ENCODE measurements at regions of chr12 and their contacts with region 1.

Region 1: DNA sequence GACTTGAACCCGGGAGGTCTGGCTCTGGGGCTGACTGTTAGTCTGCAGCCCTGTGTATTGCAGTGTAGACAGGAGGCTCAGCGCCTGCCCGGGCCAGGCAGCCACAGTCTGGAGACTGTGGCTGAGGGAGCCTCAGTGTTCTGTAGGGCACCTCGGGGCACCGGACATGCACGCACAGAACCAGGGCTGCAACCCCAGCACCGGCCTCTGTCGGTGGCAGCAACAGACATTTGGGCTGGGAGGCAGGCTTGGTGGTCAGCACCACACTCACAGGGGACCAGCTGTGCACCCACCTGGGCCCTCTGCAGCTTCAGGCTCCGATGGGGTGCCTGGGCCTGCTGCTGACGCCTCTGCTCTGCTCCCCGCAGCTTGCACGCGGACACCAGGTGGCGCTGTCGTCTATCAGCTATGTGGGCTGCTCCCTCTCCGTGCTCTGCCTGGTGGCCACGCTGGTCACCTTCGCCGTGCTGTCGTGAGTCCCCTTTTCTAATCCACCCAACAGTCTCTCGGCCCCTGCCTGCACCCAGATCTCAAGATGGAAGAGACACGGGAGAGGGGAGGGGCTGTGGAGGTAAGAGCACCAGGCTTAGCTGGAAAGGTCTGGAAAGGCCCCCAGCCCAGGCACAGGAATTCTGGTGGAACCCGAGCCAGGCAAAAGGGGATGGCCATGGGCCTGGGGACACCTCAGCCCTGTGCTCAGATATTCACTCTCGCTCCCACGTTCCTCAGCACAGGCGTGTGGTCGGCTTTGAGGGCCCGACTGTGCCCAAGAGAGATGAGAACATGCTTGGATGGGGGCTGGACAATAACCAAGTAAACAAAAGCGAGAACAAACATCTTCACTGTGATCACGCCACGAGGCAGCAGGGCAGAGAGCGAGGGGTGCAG is 151.0 kb downstream of the ADGRD1 start:
- DNase-seq: peak; percentile 92
- H3K4me3 ChIP-seq: peak overlapping the region in 1 of 2 experiments; percentile 37; a peak in 1 of 4 replicates
- H3K27ac ChIP-seq: no peak overlapping the region
- H3K4me1 ChIP-seq: peaks cover 0 to 3% of the 10 kb centered on the region in 2 experiments; a peak in 1 of 4 replicates
- H3K27me3 ChIP-seq: no peaks in the 10 kb centered on the region
- CTCF ChIP-seq: peak; percentile 27
- EP300 ChIP-seq: no peak
- RAD21 ChIP-seq: peak; percentile 89

Region 2: DNA sequence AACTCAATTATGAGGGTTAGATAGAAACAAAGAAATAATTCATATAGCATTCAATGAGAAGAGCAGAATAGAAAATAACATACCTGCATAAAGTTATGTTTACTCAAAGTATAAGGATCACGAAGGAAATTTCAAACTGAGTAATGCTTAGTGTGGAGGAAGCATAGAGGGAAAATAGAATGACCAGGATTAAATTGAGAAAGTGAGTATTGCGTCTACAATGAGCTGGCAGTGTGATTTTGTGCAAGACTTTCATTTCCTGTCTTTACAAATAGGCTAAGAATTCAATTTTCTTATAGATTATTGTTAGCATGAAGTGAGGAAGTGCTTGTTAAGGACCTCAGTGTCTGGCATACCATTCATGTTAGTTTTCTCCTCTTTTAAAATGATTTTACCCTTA is 139.0 kb before region 1 on chr12:
- CTCF ChIA-PET with region 1: no interaction called
- POLR2A ChIA-PET with region 1: no interaction called
- DNase-seq: no peak
- H3K4me3 ChIP-seq: no peak overlapping the region
- H3K27ac ChIP-seq: no peak overlapping the region
- H3K4me1 ChIP-seq: peaks cover 0 to 11% of the 10 kb centered on the region in 2 experiments; a peak in 2 of 4 replicates
- H3K27me3 ChIP-seq: no peaks in the 10 kb centered on the region
- CTCF ChIP-seq: no peak
- EP300 ChIP-seq: no peak
- RAD21 ChIP-seq: no peak

Region 3: GRCh38 chr12:131007031-131007739 is 97.5 kb before region 1 on chr12:
- CTCF ChIA-PET with region 1: interaction called, 13 read pairs
- POLR2A ChIA-PET with region 1: no interaction called
- DNase-seq: peak; percentile 89
- H3K4me3 ChIP-seq: no peak overlapping the region
- H3K27ac ChIP-seq: peak overlapping the region in 1 of 2 experiments; percentile 86; a peak in 2 of 4 replicates
- H3K4me1 ChIP-seq: peaks cover 0 to 46% of the 10 kb centered on the region in 2 experiments; a peak in 2 of 4 replicates
- H3K27me3 ChIP-seq: no peaks in the 10 kb centered on the region
- CTCF ChIP-seq: no peak
- EP300 ChIP-seq: peak in 1 of 2 experiments; percentile 68; a peak in 2 of 4 replicates
- RAD21 ChIP-seq: no peak

Region 4: DNA sequence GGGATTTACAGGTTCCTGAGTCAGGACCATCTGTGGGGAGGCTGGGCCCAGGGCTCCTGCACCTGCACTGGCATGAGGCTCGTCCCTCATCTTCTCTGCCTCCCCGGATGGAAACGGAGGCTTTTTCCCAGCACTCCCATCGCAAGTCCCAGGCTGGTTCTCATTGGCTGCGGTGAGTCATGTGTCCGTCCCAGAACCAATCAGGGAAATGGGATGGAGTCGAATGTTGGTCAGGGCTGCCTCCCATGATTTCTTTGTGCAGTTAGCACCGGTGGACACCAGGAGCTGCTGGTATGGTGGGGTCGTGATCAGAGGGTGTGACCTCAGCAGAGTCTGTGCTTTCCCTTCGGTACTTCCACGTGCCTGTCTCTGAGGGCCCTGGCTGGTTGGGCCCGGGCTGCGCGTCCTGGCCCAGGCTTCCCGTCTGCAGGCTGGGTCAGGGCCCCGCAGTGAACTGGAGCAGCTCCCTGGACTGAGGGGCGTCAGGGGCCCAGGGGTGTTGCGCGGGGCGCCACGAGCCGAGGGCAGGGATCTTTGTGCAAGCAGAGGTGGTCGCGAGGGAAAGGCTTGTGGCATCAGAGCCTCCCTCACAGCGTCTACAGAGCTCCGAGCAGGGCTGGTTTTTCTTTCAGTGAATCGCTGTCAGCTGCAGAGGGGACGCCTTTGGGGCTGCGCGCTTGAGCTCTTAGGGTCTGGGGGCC is 17.1 kb after region 1 on chr12:
- CTCF ChIA-PET with region 1: interaction called, 83 read pairs
- POLR2A ChIA-PET with region 1: no interaction called
- DNase-seq: no peak
- H3K4me3 ChIP-seq: no peak overlapping the region
- H3K27ac ChIP-seq: no peak overlapping the region
- H3K4me1 ChIP-seq: no peaks in the 10 kb centered on the region; a peak in 1 of 4 replicates
- H3K27me3 ChIP-seq: no peaks in the 10 kb centered on the region
- CTCF ChIP-seq: no peak
- EP300 ChIP-seq: no peak
- RAD21 ChIP-seq: no peak

Region 5: GRCh38 chr12:131137836-131138637 is 33.3 kb after region 1 on chr12:
- CTCF ChIA-PET with region 1: interaction called, 164 read pairs
- POLR2A ChIA-PET with region 1: no interaction called
- DNase-seq: peak; percentile 69
- H3K4me3 ChIP-seq: no peak overlapping the region
- H3K27ac ChIP-seq: no peak overlapping the region
- H3K4me1 ChIP-seq: peaks cover 0 to 23% of the 10 kb centered on the region in 2 experiments; a peak in 1 of 4 replicates
- H3K27me3 ChIP-seq: no peaks in the 10 kb centered on the region
- CTCF ChIP-seq: no peak
- EP300 ChIP-seq: no peak
- RAD21 ChIP-seq: peak; percentile 57

Region 6: GRCh38 chr12:131438881-131439280 is 334.2 kb after region 1 on chr12:
- CTCF ChIA-PET with region 1: interaction called, 11 read pairs
- POLR2A ChIA-PET with region 1: no interaction called
- DNase-seq: no peak
- H3K4me3 ChIP-seq: no peak overlapping the region
- H3K27ac ChIP-seq: no peak overlapping the region
- H3K4me1 ChIP-seq: peaks cover 0 to 21% of the 10 kb centered on the region in 2 experiments; a peak in 1 of 4 replicates
- H3K27me3 ChIP-seq: no peaks in the 10 kb centered on the region
- CTCF ChIP-seq: no peak
- EP300 ChIP-seq: no peak
- RAD21 ChIP-seq: no peak

Region 7: GRCh38 chr12:131830335-131830913 is 725.7 kb after region 1 on chr12:
- CTCF ChIA-PET with region 1: interaction called, 51 read pairs
- POLR2A ChIA-PET with region 1: interaction called, 3 read pairs
- DNase-seq: peak; percentile 87
- H3K4me3 ChIP-seq: peak overlapping the region; percentile 54 to 73
- H3K27ac ChIP-seq: peak overlapping the region; percentile 50
- H3K4me1 ChIP-seq: peaks cover 3 to 34% of the 10 kb centered on the region in 2 experiments; a peak in 1 of 4 replicates
- H3K27me3 ChIP-seq: no peaks in the 10 kb centered on the region
- CTCF ChIP-seq: peak; percentile 60
- EP300 ChIP-seq: no peak
- RAD21 ChIP-seq: peak; percentile 65